ENCODE measurements at regions of chr6 and their contacts with region 1.

Region 1: GRCh38 chr6:135438907-135439535 is 58.5 kb downstream of the AHI1 start:
- DNase-seq: no peak
- ATAC-seq: peak; percentile 42; the same call in 1 of the 2 replicates
- H3K4me3 ChIP-seq: no peak overlapping the region
- H3K27ac ChIP-seq: no peak overlapping the region
- H3K4me1 ChIP-seq: no peaks in the 10 kb centered on the region
- H3K27me3 ChIP-seq: no peaks in the 10 kb centered on the region
- CTCF ChIP-seq: peak; percentile 28 to 56 (median 36); a peak in 4 of 6 replicates
- POLR2A ChIP-seq: no peak
- RAD21 ChIP-seq: peak; percentile 52

Region 2: GRCh38 chr6:134161036-134161435 is 1278.0 kb before region 1 on chr6:
- CTCF ChIA-PET with region 1: no interaction called
- POLR2A ChIA-PET with region 1: no interaction called
- RAD21 ChIA-PET with region 1: no interaction called
- intact Hi-C with region 1: loop called (anchors 5 kb)
- DNase-seq: no peak
- ATAC-seq: no peak
- H3K4me3 ChIP-seq: no peak overlapping the region
- H3K27ac ChIP-seq: no peak overlapping the region
- H3K4me1 ChIP-seq: no peaks in the 10 kb centered on the region
- H3K27me3 ChIP-seq: no peaks in the 10 kb centered on the region
- CTCF ChIP-seq: no peak
- POLR2A ChIP-seq: no peak
- RAD21 ChIP-seq: no peak

Region 3: GRCh38 chr6:135546680-135547418 is 107.8 kb after region 1 on chr6:
- CTCF ChIA-PET with region 1: no interaction called
- POLR2A ChIA-PET with region 1: no interaction called
- RAD21 ChIA-PET with region 1: no interaction called
- intact Hi-C with region 1: no loop called
- DNase-seq: no peak
- ATAC-seq: no peak
- H3K4me3 ChIP-seq: no peak overlapping the region
- H3K27ac ChIP-seq: no peak overlapping the region
- H3K4me1 ChIP-seq: no peaks in the 10 kb centered on the region
- H3K27me3 ChIP-seq: no peaks in the 10 kb centered on the region
- CTCF ChIP-seq: no peak
- POLR2A ChIP-seq: no peak
- RAD21 ChIP-seq: no peak

Measured in HCT116 (cell line).